Activated CD4-positive, alpha-beta memory T cell treated with anti-CD3 and anti-CD28 coated beads for 36 hours (primary cell): ENCODE measurements at regions of chr1 and their contacts with region 1.

Region 1: DNA sequence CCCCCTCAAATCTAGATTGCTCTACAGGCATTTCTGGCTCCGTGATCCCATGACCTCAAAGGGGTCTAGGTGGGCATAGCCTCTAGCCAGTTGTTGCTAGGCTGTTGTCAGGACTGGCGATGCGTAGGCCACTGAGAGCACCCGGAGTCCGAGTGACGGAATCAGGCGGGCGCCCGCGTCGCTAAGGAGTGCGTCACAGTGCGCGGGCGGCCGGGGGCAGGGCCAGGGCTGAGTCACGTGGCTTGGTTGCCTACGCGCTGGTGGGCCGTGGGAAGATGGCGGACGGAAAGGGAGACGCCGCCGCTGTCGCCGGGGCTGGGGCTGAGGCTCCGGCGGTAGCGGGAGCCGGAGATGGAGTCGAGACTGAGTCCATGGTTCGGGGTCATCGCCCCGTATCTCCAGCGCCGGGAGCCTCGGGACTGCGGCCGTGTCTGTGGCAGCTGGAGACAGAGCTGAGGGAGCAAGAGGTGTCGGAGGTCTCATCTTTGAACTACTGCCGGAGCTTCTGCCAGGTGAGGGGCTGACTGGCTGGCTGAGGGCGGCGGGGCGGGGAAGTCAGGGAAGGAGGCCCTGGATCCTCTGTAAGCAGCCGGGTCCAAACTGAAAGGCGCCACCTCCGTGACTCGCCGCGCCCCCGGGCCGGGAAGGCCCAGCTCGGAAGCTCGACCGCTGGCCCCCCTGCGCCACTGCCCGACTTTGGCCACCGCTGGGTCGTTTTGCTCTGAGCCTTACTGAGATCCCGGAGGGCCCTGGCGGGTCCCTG is at the start of gene RLF:
- DNase-seq: peak; percentile 97
- H3K4me3 Mint-ChIP-seq: no peak within 1 kb of the TSS
- H3K27ac Mint-ChIP-seq: no peak within 1 kb of the TSS
- H3K4me1 Mint-ChIP-seq: peaks cover 4% of the 10 kb centered on the region
- H3K27me3 Mint-ChIP-seq: no peaks in the 10 kb centered on the region
- total RNA-seq, gene RLF: 19.6 to 19.7 TPM

Region 2: GRCh38 chr1:40040511-40041465 is 120.5 kb before region 1 on chr1 and contains the start of gene CAP1:
- CTCF ChIA-PET with region 1: no interaction called
- POLR2A ChIA-PET with region 1: no interaction called
- intact Hi-C with region 1: loop called (anchors 5 kb)
- DNase-seq: peak; percentile 100
- H3K4me3 Mint-ChIP-seq: peak within 1 kb of the TSS; percentile 92
- H3K27ac Mint-ChIP-seq: peak within 1 kb of the TSS; percentile 98
- H3K4me1 Mint-ChIP-seq: peaks cover 54% of the 10 kb centered on the region
- H3K27me3 Mint-ChIP-seq: no peaks in the 10 kb centered on the region
- total RNA-seq, gene CAP1: 616 to 633 TPM

Region 3: DNA sequence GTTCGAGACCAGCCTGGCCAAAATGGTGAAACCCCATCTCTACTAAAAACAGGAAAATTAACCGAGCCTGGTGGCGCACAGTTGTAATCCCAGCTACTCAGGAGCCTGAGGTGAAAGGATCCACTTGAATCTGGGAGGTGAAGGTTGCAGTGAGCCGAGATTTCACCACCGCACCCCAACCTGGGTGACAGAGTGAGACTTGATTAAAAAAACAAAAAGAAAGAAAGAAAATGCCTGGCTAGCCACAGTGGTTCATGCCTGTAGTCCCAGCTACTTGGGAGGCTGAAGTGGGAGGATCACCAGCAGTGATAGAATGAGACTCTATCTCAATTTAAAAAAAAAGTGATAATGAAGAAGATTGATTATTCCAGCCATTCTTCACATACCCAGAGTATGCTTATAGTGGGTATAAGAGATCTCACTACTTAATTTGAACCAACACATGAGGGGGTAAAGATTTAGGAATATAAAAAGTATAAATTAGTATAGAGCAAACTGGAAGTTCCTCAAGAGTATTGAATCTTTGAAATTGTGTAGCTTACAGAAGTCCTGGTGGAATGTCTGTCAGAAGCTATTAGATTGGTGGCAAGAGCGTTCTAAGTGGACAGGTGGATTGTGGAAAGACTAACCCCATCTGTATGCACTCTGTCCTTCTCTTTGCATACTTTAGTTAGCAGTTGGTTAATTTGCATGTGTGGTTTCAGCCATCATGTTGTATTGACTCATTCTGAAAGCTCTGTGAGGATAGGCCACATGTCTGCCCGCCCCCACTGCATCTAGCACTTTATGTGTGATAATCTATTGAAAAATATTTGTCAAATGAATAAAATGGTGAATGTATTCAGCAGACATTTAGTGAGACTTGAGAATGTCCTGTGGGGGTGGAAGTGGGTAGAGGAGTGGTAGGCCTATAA is 24.9 kb after region 1 on chr1:
- CTCF ChIA-PET with region 1: interaction called, 14 read pairs
- POLR2A ChIA-PET with region 1: interaction called, 4 read pairs
- intact Hi-C with region 1: loop called (anchors 1 kb)
- DNase-seq: peak; percentile 75
- H3K4me3 Mint-ChIP-seq: peak overlapping the region; percentile 46
- H3K27ac Mint-ChIP-seq: peak overlapping the region; percentile 56
- H3K4me1 Mint-ChIP-seq: peaks cover 45% of the 10 kb centered on the region
- H3K27me3 Mint-ChIP-seq: no peaks in the 10 kb centered on the region

Region 4: GRCh38 chr1:40241362-40241761 is 80.1 kb after region 1 on chr1:
- CTCF ChIA-PET with region 1: interaction called, 3 read pairs
- POLR2A ChIA-PET with region 1: interaction called, 9 read pairs
- intact Hi-C with region 1: loop called (anchors 2 kb)
- DNase-seq: no peak
- H3K4me3 Mint-ChIP-seq: peak overlapping the region; percentile 14
- H3K27ac Mint-ChIP-seq: peak overlapping the region; percentile 84
- H3K4me1 Mint-ChIP-seq: peaks cover 66% of the 10 kb centered on the region
- H3K27me3 Mint-ChIP-seq: no peaks in the 10 kb centered on the region

Region 5: GRCh38 chr1:40264354-40264781 is 103.1 kb after region 1 on chr1:
- CTCF ChIA-PET with region 1: interaction called, 5 read pairs
- POLR2A ChIA-PET with region 1: interaction called, 10 read pairs
- intact Hi-C with region 1: no loop called
- DNase-seq: peak; percentile 59
- H3K4me3 Mint-ChIP-seq: peak overlapping the region; percentile 16
- H3K27ac Mint-ChIP-seq: peak overlapping the region; percentile 91
- H3K4me1 Mint-ChIP-seq: peaks cover 63% of the 10 kb centered on the region
- H3K27me3 Mint-ChIP-seq: no peaks in the 10 kb centered on the region

Region 6: GRCh38 chr1:40315239-40315794 is 154.0 kb after region 1 on chr1:
- CTCF ChIA-PET with region 1: interaction called, 15 read pairs
- POLR2A ChIA-PET with region 1: no interaction called
- intact Hi-C with region 1: no loop called
- DNase-seq: peak; percentile 91
- H3K4me3 Mint-ChIP-seq: peak overlapping the region; percentile 85
- H3K27ac Mint-ChIP-seq: no peak overlapping the region
- H3K4me1 Mint-ChIP-seq: peaks cover 47% of the 10 kb centered on the region
- H3K27me3 Mint-ChIP-seq: peaks cover 9% of the 10 kb centered on the region

Region 7: GRCh38 chr1:40385437-40386358 is 224.4 kb after region 1 on chr1:
- CTCF ChIA-PET with region 1: no interaction called
- POLR2A ChIA-PET with region 1: interaction called, 10 read pairs
- intact Hi-C with region 1: loop called (anchors 2 kb)
- DNase-seq: peak; percentile 77
- H3K4me3 Mint-ChIP-seq: peak overlapping the region; percentile 81
- H3K27ac Mint-ChIP-seq: peak overlapping the region; percentile 100
- H3K4me1 Mint-ChIP-seq: peaks cover 90% of the 10 kb centered on the region
- H3K27me3 Mint-ChIP-seq: no peaks in the 10 kb centered on the region